ENCODE measurements at regions of chr16 and their contacts with region 1.

Region 1: GRCh38 chr16:75566040-75566810 is at the start of gene GABARAPL2:
- DNase-seq: peak; percentile 84 to 96 (median 91)
- ATAC-seq: peak; percentile 72
- H3K4me3 ChIP-seq: peak within 1 kb of the TSS; percentile 87 to 98
- H3K4me3 Mint-ChIP-seq: peak within 1 kb of the TSS; percentile 94
- H3K27ac ChIP-seq: peak within 1 kb of the TSS; percentile 81 to 90
- H3K27ac Mint-ChIP-seq: peak within 1 kb of the TSS; percentile 97
- H3K4me1 ChIP-seq: peaks cover 12% of the 10 kb centered on the region
- H3K4me1 Mint-ChIP-seq: peaks cover 46% of the 10 kb centered on the region
- H3K27me3 ChIP-seq: peaks cover 0 to 3% of the 10 kb centered on the region in 2 experiments
- H3K27me3 Mint-ChIP-seq: peaks cover 15% of the 10 kb centered on the region
- CTCF ChIP-seq: no peak
- total RNA-seq, gene GABARAPL2: 37.4 to 39.4 TPM

Region 2: GRCh38 chr16:75148311-75149195 is 417.7 kb before region 1 on chr16 and contains the start of gene ZFP1:
- CTCF ChIA-PET with region 1: no interaction called
- POLR2A ChIA-PET with region 1: no interaction called
- intact Hi-C with region 1: loop called in 1 of 2 experiments (anchors 5 kb)
- DNase-seq: peak; percentile 86 to 98 (median 95)
- ATAC-seq: peak; percentile 89
- H3K4me3 ChIP-seq: peak within 1 kb of the TSS; percentile 85 to 100
- H3K4me3 Mint-ChIP-seq: peak within 1 kb of the TSS; percentile 87
- H3K27ac ChIP-seq: peak within 1 kb of the TSS; percentile 84
- H3K27ac Mint-ChIP-seq: peak within 1 kb of the TSS; percentile 88
- H3K4me1 ChIP-seq: peaks cover 12% of the 10 kb centered on the region
- H3K4me1 Mint-ChIP-seq: peaks cover 16% of the 10 kb centered on the region
- H3K27me3 ChIP-seq: no peaks in the 10 kb centered on the region
- H3K27me3 Mint-ChIP-seq: no peaks in the 10 kb centered on the region
- CTCF ChIP-seq: no peak
- total RNA-seq, gene ZFP1: 11.9 to 12.9 TPM

Region 3: DNA sequence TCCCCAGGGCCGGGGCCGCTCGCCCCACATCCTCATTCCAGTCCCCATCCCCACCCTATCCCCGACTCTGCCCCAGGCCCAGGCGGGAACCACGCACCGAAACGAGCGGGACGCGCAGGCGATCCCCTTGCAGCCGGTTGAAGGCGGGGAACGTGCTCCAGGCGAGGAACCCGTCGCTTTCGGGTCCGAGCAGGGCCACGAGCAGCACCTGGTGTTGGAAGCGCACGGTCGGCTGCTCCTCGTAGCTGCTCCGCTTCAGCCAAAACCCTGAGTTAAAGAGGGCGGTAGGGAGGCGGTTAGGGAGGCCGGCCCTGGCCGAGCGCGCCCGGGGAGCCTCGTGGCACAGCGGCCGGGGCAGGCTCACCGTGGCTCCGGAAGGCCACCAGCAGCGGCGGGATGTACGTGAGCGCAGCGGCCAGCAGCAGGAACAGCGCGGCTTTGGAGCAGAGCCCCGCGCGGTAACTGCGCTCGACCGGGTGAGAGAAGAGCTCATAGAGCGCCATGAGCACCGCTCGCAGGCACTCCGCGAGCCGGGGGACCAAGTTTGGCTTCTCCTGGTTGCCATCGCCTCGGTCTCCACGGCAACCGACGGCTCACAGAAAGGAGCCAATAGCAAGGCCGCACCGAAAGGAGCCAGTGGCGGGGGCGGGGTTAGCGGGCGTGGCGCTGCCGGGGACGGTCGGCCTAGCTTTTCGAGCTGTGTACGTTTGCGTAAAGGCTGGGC is 10.4 kb before region 1 on chr16 and contains the start of gene TMEM231:
- CTCF ChIA-PET with region 1: no interaction called
- POLR2A ChIA-PET with region 1: interaction called, 9 read pairs
- intact Hi-C with region 1: loop called (anchors 1 kb)
- DNase-seq: peak; percentile 95 to 98 (median 97)
- ATAC-seq: peak; percentile 96
- H3K4me3 ChIP-seq: peak within 1 kb of the TSS; percentile 61 to 69
- H3K4me3 Mint-ChIP-seq: peak within 1 kb of the TSS; percentile 86
- H3K27ac ChIP-seq: peak within 1 kb of the TSS; percentile 65 to 70
- H3K27ac Mint-ChIP-seq: peak within 1 kb of the TSS; percentile 88
- H3K4me1 ChIP-seq: peaks cover 12% of the 10 kb centered on the region
- H3K4me1 Mint-ChIP-seq: peaks cover 14% of the 10 kb centered on the region
- H3K27me3 ChIP-seq: no peaks in the 10 kb centered on the region
- H3K27me3 Mint-ChIP-seq: peaks cover 9% of the 10 kb centered on the region
- CTCF ChIP-seq: no peak
- total RNA-seq, gene TMEM231: 2.1 to 2.8 TPM

Region 4: GRCh38 chr16:77190478-77191258 is 1624.4 kb after region 1 on chr16 and contains the start of gene MON1B:
- CTCF ChIA-PET with region 1: no interaction called
- POLR2A ChIA-PET with region 1: no interaction called
- intact Hi-C with region 1: loop called in 1 of 2 experiments (anchors 5 kb)
- DNase-seq: peak; percentile 88 to 99 (median 95)
- ATAC-seq: peak; percentile 93
- H3K4me3 ChIP-seq: peak within 1 kb of the TSS; percentile 70 to 81
- H3K4me3 Mint-ChIP-seq: peak within 1 kb of the TSS; percentile 100
- H3K27ac ChIP-seq: peak within 1 kb of the TSS; percentile 98
- H3K27ac Mint-ChIP-seq: peak within 1 kb of the TSS; percentile 100
- H3K4me1 ChIP-seq: peaks cover 26% of the 10 kb centered on the region
- H3K4me1 Mint-ChIP-seq: peaks cover 52% of the 10 kb centered on the region
- H3K27me3 ChIP-seq: no peaks in the 10 kb centered on the region
- H3K27me3 Mint-ChIP-seq: peaks cover 6% of the 10 kb centered on the region
- CTCF ChIP-seq: no peak
- total RNA-seq, gene MON1B: 49.1 to 50.7 TPM

Measured in CD8-positive, alpha-beta T cell (primary cell).